ENCODE measurements at regions of chr1 and their contacts with region 1.

Region 1: DNA sequence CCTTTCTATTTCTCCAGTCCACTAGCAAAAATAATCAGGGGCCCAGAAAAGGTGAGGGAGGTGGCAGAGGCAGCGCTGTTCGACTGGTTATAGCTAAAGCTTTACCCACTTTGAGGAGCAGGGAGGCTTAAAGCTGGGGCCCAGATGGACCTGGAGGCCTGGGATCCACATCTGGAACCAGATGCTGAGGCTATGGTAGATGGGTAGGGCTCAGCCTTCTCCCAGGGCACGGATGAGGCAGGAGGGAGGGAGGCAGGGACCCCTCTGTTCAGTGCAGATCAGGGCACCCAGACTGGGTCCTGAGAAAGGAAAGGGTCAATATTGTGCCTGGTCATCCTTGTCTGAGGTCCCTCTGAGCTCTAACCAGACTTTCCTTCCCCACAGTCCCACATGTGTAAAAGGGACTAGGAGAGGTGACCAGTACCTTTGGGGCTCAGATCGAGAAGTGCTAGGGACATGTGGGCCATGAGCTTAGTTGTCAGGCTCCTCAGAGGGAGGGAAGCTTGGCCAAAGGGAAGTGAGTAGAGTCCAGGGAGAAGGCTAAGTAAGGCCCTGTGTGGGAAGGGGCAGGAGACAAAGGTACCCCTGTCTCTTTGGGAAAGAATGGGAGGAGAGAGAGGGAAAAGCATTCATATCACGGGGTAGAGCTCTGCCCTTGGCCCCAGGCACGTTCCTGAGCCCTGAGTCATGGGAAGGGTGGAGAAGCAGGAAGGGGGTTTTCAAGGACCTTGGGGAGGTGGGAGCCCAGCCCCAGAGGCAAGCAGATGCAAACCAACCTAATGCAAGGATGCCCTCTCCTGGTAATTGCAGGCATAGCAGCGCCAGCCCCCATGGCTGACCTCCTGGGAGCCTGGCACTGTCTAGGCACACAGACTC is 15.4 kb downstream of the LMNA start:
- DNase-seq: peak; percentile 56 to 86 (median 73)
- ATAC-seq: peak in 1 of 2 donors; percentile 27
- H3K4me3 Mint-ChIP-seq: peak overlapping the region in 2 of 10 donors; percentile 4 to 13
- H3K27ac Mint-ChIP-seq: peak overlapping the region in 8 of 10 donors; percentile 48 to 89 (median 81)
- H3K4me1 Mint-ChIP-seq: peaks cover 15 to 52% (median 45%) of the 10 kb centered on the region in 4 donors
- H3K27me3 Mint-ChIP-seq: no peaks in the 10 kb centered on the region

Region 2: GRCh38 chr1:156090822-156091188 is 39.1 kb before region 1 on chr1:
- POLR2A ChIA-PET with region 1: interaction called, 30 read pairs
- DNase-seq: peak; percentile 78 to 92 (median 84)
- ATAC-seq: peak; percentile 98 to 99
- H3K4me3 Mint-ChIP-seq: no peak overlapping the region
- H3K27ac Mint-ChIP-seq: peak overlapping the region in 5 of 10 donors; percentile 26 to 86 (median 66)
- H3K4me1 Mint-ChIP-seq: peaks cover 4 to 11% (median 10%) of the 10 kb centered on the region in 4 donors
- H3K27me3 Mint-ChIP-seq: peaks cover 9 to 48% (median 21%) of the 10 kb centered on the region in 5 donors

Region 3: GRCh38 chr1:156096640-156097391 is 33.1 kb before region 1 on chr1:
- POLR2A ChIA-PET with region 1: interaction called, 30 read pairs
- DNase-seq: peak; percentile 73 to 92 (median 84)
- ATAC-seq: peak; percentile 80 to 82
- H3K4me3 Mint-ChIP-seq: peak overlapping the region; percentile 5 to 85 (median 72)
- H3K27ac Mint-ChIP-seq: peak overlapping the region; percentile 75 to 99 (median 98)
- H3K4me1 Mint-ChIP-seq: peaks cover 19 to 47% (median 32%) of the 10 kb centered on the region in 4 donors
- H3K27me3 Mint-ChIP-seq: peaks cover 0 to 12% (median 5%) of the 10 kb centered on the region in 5 donors

Region 4: GRCh38 chr1:156114101-156114916 is 15.6 kb before region 1 on chr1 and contains the start of gene LMNA:
- POLR2A ChIA-PET with region 1: interaction called, 12 read pairs
- DNase-seq: peak in 7 of 10 donors; percentile 33 to 73 (median 48)
- ATAC-seq: peak; percentile 72 to 76
- H3K4me3 Mint-ChIP-seq: peak within 1 kb of the TSS; percentile 76 to 93 (median 90)
- H3K27ac Mint-ChIP-seq: peak within 1 kb of the TSS; percentile 53 to 96 (median 88)
- H3K4me1 Mint-ChIP-seq: peaks cover 10 to 32% (median 25%) of the 10 kb centered on the region in 4 donors
- H3K27me3 Mint-ChIP-seq: peaks cover 4 to 39% (median 33%) of the 10 kb centered on the region in 5 donors
- polyA plus RNA-seq, gene LMNA: 0.62 to 4.0 (median 0.75) TPM

Measured in naive thymus-derived CD8-positive, alpha-beta T cell (primary cell).